Naive thymus-derived CD4-positive, alpha-beta T cell (primary cell): ENCODE measurements at regions of chr15 and their contacts with region 1.

Region 1: GRCh38 chr15:64521726-64522164 is 61.4 kb downstream of the ZNF609 start:
- DNase-seq: no peak
- ATAC-seq: peak; percentile 58
- H3K4me3 ChIP-seq: no peak overlapping the region
- H3K4me3 Mint-ChIP-seq: peak overlapping the region in 6 of 10 donors; percentile 1 to 62 (median 37)
- H3K27ac ChIP-seq: no peak overlapping the region
- H3K27ac Mint-ChIP-seq: peak overlapping the region in 7 of 9 donors; percentile 15 to 83 (median 52)
- H3K4me1 ChIP-seq: peaks cover 0 to 37% of the 10 kb centered on the region in 2 donors
- H3K4me1 Mint-ChIP-seq: peaks cover 37 to 95% (median 83%) of the 10 kb centered on the region in 7 donors
- H3K27me3 ChIP-seq: no peaks in the 10 kb centered on the region
- H3K27me3 Mint-ChIP-seq: no peaks in the 10 kb centered on the region

Region 2: GRCh38 chr15:64562003-64562640 is 40.4 kb after region 1 on chr15:
- CTCF ChIA-PET with region 1: no interaction called
- POLR2A ChIA-PET with region 1: no interaction called
- intact Hi-C with region 1: loop called in 1 of 2 experiments (anchors 5 kb)
- DNase-seq: no peak
- ATAC-seq: no peak
- H3K4me3 ChIP-seq: no peak overlapping the region
- H3K4me3 Mint-ChIP-seq: no peak overlapping the region
- H3K27ac ChIP-seq: no peak overlapping the region
- H3K27ac Mint-ChIP-seq: peak overlapping the region in 7 of 9 donors; percentile 43 to 82 (median 70)
- H3K4me1 ChIP-seq: peaks cover 0 to 26% of the 10 kb centered on the region in 2 donors
- H3K4me1 Mint-ChIP-seq: peaks cover 34 to 82% (median 73%) of the 10 kb centered on the region in 7 donors
- H3K27me3 ChIP-seq: no peaks in the 10 kb centered on the region
- H3K27me3 Mint-ChIP-seq: no peaks in the 10 kb centered on the region

Region 3: DNA sequence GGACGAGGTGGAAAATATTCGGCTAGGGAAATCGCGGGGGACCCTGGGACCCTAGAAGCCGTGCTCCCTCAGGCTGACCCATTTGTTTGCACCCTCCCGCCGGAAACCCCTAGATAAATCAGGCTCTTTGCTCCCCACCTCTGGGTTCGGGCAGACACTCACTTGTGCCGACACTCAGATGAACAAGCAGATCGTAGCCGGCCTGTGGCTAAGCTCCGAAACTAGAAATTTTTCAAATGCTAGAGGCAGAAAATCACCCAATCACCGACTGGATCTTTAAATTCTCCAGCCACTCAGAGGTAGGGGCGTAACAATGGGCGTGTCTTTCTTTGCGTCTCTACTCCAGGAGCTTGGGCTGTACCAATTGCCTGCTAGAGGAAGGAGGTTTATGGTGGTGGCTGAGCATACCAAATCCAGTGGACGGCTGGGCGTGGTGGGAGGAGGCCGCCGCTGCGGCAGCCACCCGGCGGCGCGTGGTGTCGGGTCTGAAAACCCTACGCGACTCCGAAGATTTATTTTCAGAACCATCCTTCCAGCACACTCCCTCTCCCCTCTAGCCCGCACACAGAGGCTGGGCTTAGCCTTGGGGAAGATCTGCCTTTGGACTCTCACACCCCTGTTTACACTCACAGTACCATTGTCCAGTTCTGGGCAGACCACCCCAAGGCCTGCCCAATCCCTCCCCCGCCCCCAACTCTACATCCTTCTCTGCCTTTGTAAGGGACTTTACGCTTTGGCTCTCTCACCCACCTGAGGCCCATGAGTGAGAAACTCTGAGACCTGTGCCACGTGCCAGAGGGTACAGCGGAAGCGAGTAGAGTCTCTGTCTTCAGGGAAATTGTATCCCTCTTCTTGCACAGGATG is 303.9 kb after region 1 on chr15 and contains the start of gene PIF1:
- CTCF ChIA-PET with region 1: no interaction called
- POLR2A ChIA-PET with region 1: no interaction called
- intact Hi-C with region 1: no loop called
- DNase-seq: peak; percentile 44 to 92 (median 87)
- ATAC-seq: peak; percentile 99
- H3K4me3 ChIP-seq: peak within 1 kb of the TSS; percentile 71
- H3K4me3 Mint-ChIP-seq: peak within 1 kb of the TSS; percentile 82 to 95 (median 88)
- H3K27ac ChIP-seq: peak within 1 kb of the TSS; percentile 37
- H3K27ac Mint-ChIP-seq: peak within 1 kb of the TSS in 8 of 9 donors; percentile 41 to 91 (median 75)
- H3K4me1 ChIP-seq: peaks cover 21 to 24% of the 10 kb centered on the region in 2 donors
- H3K4me1 Mint-ChIP-seq: peaks cover 25 to 42% (median 35%) of the 10 kb centered on the region in 7 donors
- H3K27me3 ChIP-seq: peaks cover 0 to 4% of the 10 kb centered on the region in 2 donors
- H3K27me3 Mint-ChIP-seq: peaks cover 0 to 19% (median 12%) of the 10 kb centered on the region in 5 donors
- total RNA-seq, gene PIF1: 0.34 to 30.2 (median 1.0) TPM in 3 of 5 experiments, not detected in the others

Region 4: DNA sequence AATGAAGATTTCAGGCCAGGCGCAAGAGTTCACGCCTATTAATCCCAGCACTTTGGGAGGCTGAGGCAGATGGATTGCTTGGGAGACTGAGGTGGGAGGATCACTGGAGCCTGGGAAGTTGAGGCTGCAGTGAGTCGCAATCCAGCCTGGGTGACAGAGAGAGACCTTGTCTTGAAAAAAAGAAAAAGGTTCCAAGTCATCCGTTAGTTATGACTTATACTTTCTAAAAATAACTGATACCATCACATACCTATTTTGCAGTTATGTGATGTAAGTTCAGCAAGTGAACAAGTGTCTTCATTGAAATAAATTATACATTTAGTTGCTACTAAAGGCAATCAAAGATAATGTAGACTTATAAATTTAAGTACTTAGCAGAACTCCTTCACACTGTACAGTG is 641.3 kb after region 1 on chr15:
- CTCF ChIA-PET with region 1: no interaction called
- POLR2A ChIA-PET with region 1: no interaction called
- intact Hi-C with region 1: no loop called
- DNase-seq: no peak
- ATAC-seq: no peak
- H3K4me3 ChIP-seq: no peak overlapping the region
- H3K4me3 Mint-ChIP-seq: no peak overlapping the region
- H3K27ac ChIP-seq: no peak overlapping the region
- H3K27ac Mint-ChIP-seq: peak overlapping the region in 1 of 9 donors; percentile 33
- H3K4me1 ChIP-seq: no peaks in the 10 kb centered on the region
- H3K4me1 Mint-ChIP-seq: peaks cover 1 to 22% (median 9%) of the 10 kb centered on the region in 7 donors
- H3K27me3 ChIP-seq: no peaks in the 10 kb centered on the region
- H3K27me3 Mint-ChIP-seq: no peaks in the 10 kb centered on the region